Activated T-helper 2 cell treated with anti-CD3 and anti-CD28 coated beads, Interferon-gamma antibody, Interleukin-2, Interleukin-4, amounts not matched to agents 10 μg/mL and 5 μg/mL and 100 μg/mL, durations not matched to agents 14 hours and 24 hours and 36 hours (primary cell): ENCODE measurements at regions of chr3 and their contacts with region 1.

Region 1: DNA sequence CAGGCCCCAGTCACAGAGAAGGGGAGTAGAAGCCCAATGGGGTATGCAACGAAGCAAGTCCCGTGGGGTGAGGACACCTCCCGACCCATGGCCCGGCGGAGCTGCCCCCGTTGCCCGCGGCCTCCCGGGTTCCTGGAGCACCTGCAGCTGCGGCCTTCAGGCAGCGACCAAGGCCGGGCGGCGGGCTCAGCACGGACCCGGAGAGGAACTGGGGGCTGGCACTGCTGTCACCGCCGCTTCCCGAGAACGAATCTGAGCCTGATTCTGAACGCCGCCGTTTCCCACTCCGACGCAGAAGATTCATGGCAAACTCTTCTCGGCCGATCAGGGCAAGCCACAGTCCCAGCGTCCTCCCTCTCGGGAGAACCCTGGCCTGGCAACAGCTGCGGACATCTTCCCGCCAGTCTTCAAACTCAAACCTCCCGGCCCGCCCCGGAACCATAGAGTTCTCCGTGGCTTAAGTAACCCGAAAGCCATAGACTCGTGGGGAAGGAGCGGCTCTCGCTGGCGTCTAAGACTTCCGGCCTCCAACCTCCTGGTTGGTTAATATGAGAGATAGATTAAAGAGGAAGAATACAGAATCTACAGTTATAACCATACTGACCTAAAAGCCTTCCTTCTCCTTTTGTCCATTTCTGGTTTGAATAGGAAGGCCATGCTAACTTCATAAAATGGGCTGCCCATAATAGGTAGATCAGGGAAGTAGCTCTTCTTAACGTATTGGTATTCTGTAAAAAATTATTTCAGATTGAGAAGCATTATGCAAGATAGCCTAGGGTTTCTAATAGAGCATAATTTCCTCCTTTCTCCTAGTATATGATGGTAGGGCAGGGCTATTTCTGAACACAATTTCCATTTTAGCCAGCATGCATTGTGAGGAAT is at the start of gene POLQ:
- DNase-seq: peak; percentile 84
- H3K4me3 Mint-ChIP-seq: peak within 1 kb of the TSS; percentile 91
- H3K27ac Mint-ChIP-seq: peak within 1 kb of the TSS; percentile 93
- H3K4me1 Mint-ChIP-seq: peaks cover 30% of the 10 kb centered on the region
- H3K27me3 Mint-ChIP-seq: no peaks in the 10 kb centered on the region
- total RNA-seq, gene POLQ: 23.8 and 24.0 TPM in 2 replicates

Region 2: GRCh38 chr3:121660356-121661171 is 114.7 kb after region 1 on chr3 and contains the start of gene HCLS1:
- intact Hi-C with region 1: loop called (anchors 2 kb)
- DNase-seq: peak; percentile 72
- H3K4me3 Mint-ChIP-seq: peak within 1 kb of the TSS; percentile 97
- H3K27ac Mint-ChIP-seq: peak within 1 kb of the TSS; percentile 99
- H3K4me1 Mint-ChIP-seq: peaks cover 46% of the 10 kb centered on the region
- H3K27me3 Mint-ChIP-seq: no peaks in the 10 kb centered on the region
- total RNA-seq, gene HCLS1: 234 and 243 TPM in 2 replicates

Region 3: DNA sequence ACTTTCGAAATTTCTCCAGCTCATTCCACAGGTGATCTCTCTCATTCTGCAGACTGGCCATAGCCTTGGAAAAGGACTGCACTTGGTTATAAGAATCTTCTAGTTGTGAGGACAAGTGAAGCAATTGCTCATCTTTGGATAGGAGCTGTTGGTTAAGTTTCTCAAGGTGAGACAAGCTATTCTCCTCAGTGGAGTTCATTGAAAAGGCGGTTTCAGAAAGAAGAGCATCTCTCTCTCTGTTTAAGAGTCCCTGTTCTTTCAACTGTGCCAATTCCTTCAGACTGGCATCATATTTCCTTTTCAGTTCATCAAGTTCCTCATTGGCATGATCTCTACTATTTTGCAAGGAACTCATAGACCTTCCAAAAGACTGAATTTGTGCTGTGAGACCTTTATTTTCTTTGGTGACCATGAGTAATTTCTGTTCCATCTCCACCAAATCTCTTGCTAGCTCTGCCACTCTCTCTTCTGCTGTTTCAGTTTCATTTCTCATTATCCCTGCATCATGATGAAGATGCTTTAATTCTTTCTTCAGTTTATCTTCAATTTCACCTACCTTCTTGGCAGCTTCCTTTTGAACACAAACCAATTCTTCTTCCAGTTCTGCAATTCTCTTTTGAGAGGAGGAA is 145.1 kb after region 1 on chr3:
- intact Hi-C with region 1: no loop called
- DNase-seq: no peak
- H3K4me3 Mint-ChIP-seq: no peak overlapping the region
- H3K27ac Mint-ChIP-seq: peak overlapping the region; percentile 42
- H3K4me1 Mint-ChIP-seq: peaks cover 18% of the 10 kb centered on the region
- H3K27me3 Mint-ChIP-seq: no peaks in the 10 kb centered on the region

Region 4: GRCh38 chr3:121883507-121883906 is 337.7 kb after region 1 on chr3:
- intact Hi-C with region 1: loop called (anchors 5 kb)
- DNase-seq: no peak
- H3K4me3 Mint-ChIP-seq: no peak overlapping the region
- H3K27ac Mint-ChIP-seq: no peak overlapping the region
- H3K4me1 Mint-ChIP-seq: peaks cover 4% of the 10 kb centered on the region
- H3K27me3 Mint-ChIP-seq: no peaks in the 10 kb centered on the region

Region 5: DNA sequence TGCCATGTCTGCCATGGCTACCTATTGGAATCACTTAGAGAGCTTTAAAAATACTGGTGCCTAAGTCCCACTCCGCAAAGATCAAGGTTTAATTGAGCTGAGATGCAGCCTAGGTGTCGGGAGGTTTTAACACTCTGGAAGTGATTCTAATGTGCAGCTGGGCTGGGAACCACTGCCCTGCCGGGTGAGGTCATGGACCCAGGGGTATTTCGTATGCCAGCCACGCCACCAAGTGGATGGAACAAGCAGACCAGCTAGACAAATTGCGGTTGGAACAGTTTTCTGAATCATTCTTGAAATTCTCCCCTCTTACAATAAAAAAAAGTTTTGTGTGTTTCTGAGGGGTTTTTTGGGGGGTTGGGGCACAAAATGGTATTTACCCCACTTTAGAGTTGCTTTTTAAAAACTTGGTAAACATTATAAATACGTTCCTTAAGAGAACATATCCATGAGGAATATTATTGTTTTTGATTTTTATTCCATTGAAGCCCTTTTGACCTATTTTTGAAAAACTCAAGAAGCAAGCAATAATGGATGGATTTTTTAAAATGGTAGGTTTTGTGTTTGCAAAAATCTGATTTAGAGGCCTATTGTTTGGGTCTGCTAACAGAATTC is 713.0 kb after region 1 on chr3:
- intact Hi-C with region 1: loop called (anchors 1 kb)
- DNase-seq: peak; percentile 56
- H3K4me3 Mint-ChIP-seq: no peak overlapping the region
- H3K27ac Mint-ChIP-seq: no peak overlapping the region
- H3K4me1 Mint-ChIP-seq: peaks cover 18% of the 10 kb centered on the region
- H3K27me3 Mint-ChIP-seq: peaks cover 8% of the 10 kb centered on the region

Region 6: GRCh38 chr3:122533931-122534334 is 988.1 kb after region 1 on chr3:
- intact Hi-C with region 1: loop called (anchors 1 kb)
- DNase-seq: peak; percentile 44
- H3K4me3 Mint-ChIP-seq: no peak overlapping the region
- H3K27ac Mint-ChIP-seq: peak overlapping the region; percentile 54
- H3K4me1 Mint-ChIP-seq: peaks cover 46% of the 10 kb centered on the region
- H3K27me3 Mint-ChIP-seq: no peaks in the 10 kb centered on the region

Region 7: GRCh38 chr3:123028233-123028828 is 1482.5 kb after region 1 on chr3:
- intact Hi-C with region 1: loop called (anchors 1 kb)
- DNase-seq: no peak
- H3K4me3 Mint-ChIP-seq: peak overlapping the region; percentile 59
- H3K27ac Mint-ChIP-seq: no peak overlapping the region
- H3K4me1 Mint-ChIP-seq: peaks cover 11% of the 10 kb centered on the region
- H3K27me3 Mint-ChIP-seq: peaks cover 53% of the 10 kb centered on the region